ENCODE measurements at regions of chr1 and their contacts with region 1.

Region 1: GRCh38 chr1:8314346-8315280 is 3.3 kb upstream of the SLC45A1 start:
- DNase-seq: peak; percentile 76
- CTCF ChIP-seq: peak; percentile 83

Region 2: GRCh38 chr1:7975212-7975865 is 339.3 kb before region 1 on chr1:
- CTCF ChIA-PET with region 1: interaction called, 19 read pairs
- POLR2A ChIA-PET with region 1: no interaction called
- DNase-seq: peak; percentile 67
- CTCF ChIP-seq: peak; percentile 74

Region 3: DNA sequence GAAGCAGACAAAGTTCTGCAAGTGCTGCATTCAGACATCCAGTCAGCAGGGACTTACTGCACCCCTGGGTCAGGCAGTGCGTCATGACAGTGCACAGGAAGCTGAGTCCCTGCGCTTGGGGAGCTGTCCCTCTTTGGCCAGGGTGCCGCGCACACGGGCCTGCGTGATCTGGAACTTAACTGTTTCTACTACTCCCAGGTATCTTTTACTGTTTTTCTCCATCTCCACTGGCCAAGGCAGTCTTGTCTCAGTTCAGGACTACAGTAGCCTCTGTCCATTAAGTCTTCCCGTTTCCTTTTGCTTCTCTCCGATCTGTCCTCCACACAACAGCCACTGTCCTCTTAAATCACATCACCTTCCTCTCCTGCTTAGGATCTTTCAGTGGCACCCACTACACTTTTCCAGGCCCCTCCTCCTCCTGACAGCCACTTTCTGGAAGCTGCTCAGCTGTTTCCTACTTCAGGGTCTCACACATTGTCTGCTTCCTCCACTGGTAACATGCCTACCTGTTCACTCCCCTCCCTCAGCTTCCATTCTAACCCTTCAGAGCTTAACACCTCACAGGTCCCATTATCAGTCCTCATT is 304.4 kb before region 1 on chr1:
- CTCF ChIA-PET with region 1: interaction called, 116 read pairs
- POLR2A ChIA-PET with region 1: no interaction called
- DNase-seq: no peak
- CTCF ChIP-seq: no peak

Region 4: DNA sequence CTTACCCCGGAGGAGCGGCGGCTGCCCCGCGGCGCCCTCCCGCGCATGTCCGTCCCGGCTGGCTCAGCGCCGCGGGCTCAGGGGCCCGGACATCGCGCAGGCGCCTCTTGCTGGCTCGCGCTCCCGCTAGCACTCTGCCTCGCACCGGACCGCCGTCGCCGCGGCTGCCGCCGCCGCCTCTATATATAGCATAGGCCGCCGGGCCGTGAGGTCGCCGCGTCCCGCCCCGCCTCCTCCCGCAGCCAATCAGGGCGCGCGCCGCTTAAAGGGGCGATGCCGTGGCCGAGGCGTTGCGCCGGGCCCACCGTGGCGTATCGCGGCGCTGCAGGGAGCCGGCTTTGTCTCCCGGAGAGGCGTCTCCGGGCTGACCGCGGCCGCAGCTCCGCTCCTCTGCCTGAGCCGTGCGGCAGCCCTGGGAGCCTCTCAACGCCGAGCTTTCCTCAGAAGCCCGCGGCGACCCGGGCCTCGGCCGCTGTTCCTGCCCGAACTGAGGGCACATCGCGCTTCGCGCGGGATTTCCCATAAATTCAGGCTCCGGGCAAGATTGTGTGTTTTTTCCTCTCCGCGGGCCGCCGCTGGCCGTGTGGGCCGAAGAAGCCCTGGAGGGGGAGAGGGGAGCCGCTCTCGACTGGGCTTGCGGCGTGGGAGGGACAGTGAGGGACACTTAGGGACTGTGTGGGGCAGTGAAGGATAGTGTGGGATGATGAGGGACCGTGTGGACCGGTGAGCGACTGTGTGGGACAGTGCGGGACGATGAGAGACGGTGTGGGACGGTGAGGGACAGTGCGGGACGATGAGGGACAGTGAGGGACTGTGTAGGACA is 288.2 kb before region 1 on chr1 and contains the start of gene ERRFI1:
- CTCF ChIA-PET with region 1: interaction called, 116 read pairs
- POLR2A ChIA-PET with region 1: no interaction called
- DNase-seq: peak; percentile 94
- CTCF ChIP-seq: no peak

Region 5: DNA sequence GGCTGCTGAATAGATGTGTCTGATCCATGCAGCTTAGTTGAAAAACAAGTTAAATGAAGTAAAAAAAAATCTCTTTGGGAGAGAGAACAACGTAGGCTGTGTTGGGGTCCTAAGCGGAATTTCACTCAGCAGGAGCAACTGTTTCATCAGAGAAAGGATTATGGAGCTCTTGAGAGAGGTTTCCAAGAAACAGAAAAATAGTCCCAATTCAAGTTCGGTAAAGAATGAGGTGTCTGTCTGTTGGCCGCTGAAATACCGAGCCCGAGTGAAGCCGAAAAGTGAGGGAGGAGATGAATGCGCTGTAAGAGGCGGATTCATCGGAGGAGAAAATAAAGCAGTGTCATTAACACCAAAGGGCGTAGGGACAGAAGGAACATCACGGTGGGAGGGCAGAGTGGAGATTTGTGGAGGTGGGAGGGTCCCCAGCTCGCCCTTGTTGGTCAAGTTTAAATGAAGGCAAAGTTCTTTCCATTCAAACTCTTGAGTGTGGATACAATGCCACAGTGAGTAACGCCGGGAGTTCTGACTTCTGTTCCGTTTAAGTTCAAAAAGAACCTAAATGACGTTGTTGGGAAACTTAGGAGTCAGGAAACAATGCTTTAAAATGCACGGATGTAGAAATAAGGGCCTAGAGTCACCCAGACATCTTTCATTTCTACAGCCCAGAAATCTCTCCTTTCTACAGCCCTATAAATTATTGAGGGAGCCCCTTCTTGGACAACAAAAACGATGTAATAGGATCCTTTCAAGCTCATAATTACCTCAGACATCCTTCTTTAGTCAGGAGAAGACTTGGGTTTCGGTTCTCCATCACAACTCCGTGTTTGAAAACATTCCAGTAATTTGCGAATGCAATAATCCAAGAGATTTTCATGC is 12.3 kb before region 1 on chr1:
- CTCF ChIA-PET with region 1: interaction called, 23 read pairs
- POLR2A ChIA-PET with region 1: no interaction called
- DNase-seq: no peak
- CTCF ChIP-seq: no peak

Measured in GM10248 (cell line).